Heart left ventricle (tissue), 16 donors: ENCODE measurements at regions of chr20 and their contacts with region 1.

Region 1: DNA sequence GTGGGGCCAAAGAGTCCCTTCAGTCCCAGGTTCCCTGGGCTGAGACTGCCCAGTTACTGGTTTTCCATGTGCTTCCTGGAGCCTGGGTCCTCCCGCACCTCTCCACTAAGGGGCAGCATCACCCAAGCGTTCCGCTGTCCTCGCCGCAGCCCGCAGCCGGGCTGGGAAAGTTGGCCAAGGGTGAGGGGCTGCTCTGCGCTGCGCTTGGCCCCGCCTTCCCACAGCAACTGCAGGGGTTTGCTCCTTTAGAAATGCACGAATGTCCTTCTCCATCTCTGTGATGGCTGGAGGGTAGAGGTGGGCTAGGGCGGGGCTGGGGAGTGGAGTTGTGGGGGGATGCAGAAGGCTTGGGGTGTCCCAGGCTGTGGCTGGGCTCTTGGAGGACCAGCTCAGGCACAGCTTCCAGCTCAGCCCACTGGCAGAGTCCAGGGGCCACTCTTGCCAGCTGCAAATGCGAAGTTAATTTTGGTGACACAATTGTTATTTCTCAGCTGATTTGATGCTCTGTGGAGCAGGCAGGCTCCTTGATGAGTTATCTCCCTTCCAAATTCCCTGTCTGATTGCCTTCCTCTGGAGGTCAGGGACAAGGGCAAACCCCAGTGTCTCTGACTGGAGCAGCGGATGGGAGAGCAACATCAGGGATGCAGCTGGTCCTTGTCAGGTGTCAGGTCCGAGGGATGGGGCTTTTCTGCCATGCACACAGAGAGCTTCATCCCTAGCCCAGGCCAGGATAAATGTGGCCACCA is 63.2 kb downstream of the NOL4L start:
- DNase-seq: peak in 4 of 5 donors; percentile 64 to 81 (median 70)
- ATAC-seq: peak; percentile 45 to 80 (median 73)
- H3K4me3 ChIP-seq: no peak overlapping the region
- H3K27ac ChIP-seq: no peak overlapping the region
- H3K4me1 ChIP-seq: peaks cover 0 to 59% (median 36%) of the 10 kb centered on the region in 12 donors
- H3K27me3 ChIP-seq: no peaks in the 10 kb centered on the region
- CTCF ChIP-seq: peak; percentile 76 to 92 (median 83)
- POLR2A ChIP-seq: no peak

Region 2: DNA sequence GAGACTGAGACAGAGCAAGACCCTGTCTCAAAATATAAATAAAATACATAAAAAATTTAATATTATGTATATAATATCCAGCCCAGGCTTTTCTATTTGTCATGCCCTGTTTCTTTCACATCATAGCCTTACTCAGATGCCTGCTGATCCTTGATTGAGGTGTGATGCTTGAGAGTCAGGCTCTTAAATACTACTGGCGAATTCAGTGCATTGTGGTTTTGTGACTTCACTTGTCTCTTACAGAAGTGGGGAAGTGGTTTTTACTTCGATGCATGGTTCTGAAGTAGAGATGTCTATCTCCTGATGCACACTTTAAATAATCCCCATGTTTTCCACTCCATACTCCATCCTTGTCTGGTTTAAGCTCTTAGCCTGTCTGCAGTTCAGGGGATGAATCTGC is 134.7 kb before region 1 on chr20:
- intact Hi-C with region 1: no loop called
- DNase-seq: no peak
- ATAC-seq: no peak
- H3K4me3 ChIP-seq: no peak overlapping the region
- H3K27ac ChIP-seq: no peak overlapping the region
- H3K4me1 ChIP-seq: peaks cover 0 to 35% (median 19%) of the 10 kb centered on the region in 12 donors
- H3K27me3 ChIP-seq: no peaks in the 10 kb centered on the region
- CTCF ChIP-seq: no peak
- POLR2A ChIP-seq: no peak

Region 3: DNA sequence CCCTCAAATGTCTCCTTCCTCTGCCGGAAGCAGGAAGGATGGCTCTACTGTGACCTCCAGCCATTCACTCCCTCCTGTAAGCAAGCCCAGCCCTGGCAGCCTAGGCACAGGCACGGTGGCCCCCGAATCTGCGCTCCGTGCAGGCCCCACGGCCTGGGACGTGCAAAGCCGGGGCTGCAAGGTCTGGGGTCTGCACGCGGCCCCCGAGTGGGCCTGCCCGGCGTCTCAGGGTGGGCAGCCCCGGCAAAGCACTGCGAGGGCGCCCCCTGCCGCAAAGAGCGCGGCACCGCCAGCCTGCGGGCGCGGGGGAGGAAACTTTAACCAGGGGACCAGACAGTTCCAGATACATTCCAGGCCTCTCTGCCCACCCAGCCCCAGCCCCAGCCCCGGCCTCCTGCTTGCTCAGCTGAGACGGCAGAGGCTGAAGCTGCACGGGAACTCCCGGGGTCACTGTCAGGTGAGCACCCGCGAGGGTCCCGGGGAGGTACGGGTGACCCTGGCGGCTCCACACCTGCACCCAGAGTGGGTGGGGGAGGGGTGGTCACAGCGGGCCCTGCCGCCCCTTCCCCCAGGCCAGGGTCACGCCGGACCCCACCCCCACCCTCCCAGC is 65.0 kb before region 1 on chr20:
- intact Hi-C with region 1: no loop called
- DNase-seq: peak in 2 of 5 donors; percentile 55 to 69
- ATAC-seq: peak; percentile 45 to 74 (median 56)
- H3K4me3 ChIP-seq: peak overlapping the region; percentile 19 to 72 (median 55)
- H3K27ac ChIP-seq: peak overlapping the region in 4 of 12 donors; percentile 24 to 64 (median 42)
- H3K4me1 ChIP-seq: peaks cover 0 to 22% (median 16%) of the 10 kb centered on the region in 12 donors
- H3K27me3 ChIP-seq: no peaks in the 10 kb centered on the region
- CTCF ChIP-seq: peak; percentile 65 to 88 (median 82)
- POLR2A ChIP-seq: no peak

Region 4: DNA sequence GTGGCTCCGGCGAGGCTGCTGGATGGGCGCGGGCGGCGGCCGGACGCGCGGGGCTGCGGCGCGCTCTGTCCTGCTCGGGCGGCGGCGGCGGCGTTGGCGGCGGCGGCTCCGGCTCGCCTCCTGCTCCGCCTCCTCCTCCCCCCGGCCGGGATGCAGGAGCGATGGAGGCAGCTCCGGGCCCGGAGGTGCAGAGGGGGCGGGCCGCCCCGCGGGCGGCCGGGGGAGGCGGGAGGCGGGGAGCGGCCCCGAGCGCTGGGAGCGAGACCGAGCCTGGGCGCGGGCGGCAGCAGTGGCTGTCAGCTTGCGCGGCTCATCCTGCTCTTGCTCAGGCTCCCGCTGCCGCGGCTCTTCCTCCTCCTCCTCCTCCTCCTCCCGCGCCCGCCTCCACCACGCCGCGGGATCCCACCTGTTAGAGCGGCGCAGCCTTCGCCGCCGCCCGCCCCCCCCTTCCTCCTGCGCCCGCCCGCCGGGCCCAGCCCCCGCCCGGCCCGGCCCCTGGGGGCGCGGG is 63.1 kb after region 1 on chr20 and contains the start of gene NOL4L:
- intact Hi-C with region 1: loop called in 2 of 10 experiments (anchors 5 kb)
- DNase-seq: peak in 1 of 5 donors; percentile 47
- ATAC-seq: peak in 2 of 4 donors; percentile 7 to 9
- H3K4me3 ChIP-seq: peak within 1 kb of the TSS; percentile 37 to 80 (median 64)
- H3K27ac ChIP-seq: peak within 1 kb of the TSS in 4 of 12 donors; percentile 34 to 80 (median 53)
- H3K4me1 ChIP-seq: peaks cover 0 to 36% (median 4%) of the 10 kb centered on the region in 12 donors
- H3K27me3 ChIP-seq: peaks cover 0 to 14% (median 4%) of the 10 kb centered on the region in 9 donors
- CTCF ChIP-seq: no peak
- POLR2A ChIP-seq: no peak
- total RNA-seq, gene NOL4L: 3.1 to 15.0 (median 6.7) TPM

Region 5: DNA sequence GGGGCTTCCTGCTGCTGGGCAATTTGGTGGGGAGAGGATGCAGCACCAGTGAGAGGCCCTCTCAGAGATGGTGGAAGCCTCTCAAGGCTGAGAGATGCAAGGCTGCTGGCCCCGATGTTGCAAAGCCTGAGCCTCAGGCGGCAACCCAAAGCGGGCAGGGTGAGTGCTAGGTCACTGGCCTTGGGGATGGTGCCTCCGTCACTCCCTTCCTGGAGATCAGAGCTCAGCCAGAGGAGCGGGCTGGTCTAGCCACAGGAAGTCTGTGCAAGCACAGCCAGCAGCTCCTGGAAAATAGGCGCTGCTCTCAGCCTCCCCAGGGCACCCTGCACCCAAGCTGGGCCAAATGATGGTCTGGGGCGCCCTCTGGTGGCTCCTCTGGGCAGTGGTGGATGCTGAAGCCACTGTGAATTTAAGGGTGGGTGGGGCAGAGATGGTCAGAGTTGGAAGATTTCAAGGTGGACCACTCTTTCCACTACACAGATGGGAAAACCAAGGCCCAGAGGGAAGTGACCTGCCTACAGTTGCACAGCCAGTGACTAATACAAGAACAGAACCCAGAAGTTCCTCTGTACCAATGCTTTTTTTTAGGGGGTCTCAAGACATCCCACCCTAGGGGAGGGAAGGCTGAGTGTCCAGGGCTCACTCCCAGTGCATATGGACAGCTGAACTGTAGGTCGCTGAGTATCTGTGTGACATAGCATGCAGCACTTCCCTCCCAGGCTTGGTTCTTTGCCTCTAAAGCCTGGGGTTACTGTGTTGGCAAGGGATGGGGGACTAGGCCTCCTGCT is 131.0 kb after region 1 on chr20:
- intact Hi-C with region 1: loop called (anchors 1 to 2 kb)
- DNase-seq: peak; percentile 85 to 92 (median 86)
- ATAC-seq: peak; percentile 93 to 98 (median 97)
- H3K4me3 ChIP-seq: no peak overlapping the region
- H3K27ac ChIP-seq: no peak overlapping the region
- H3K4me1 ChIP-seq: peaks cover 0 to 5% (median 1%) of the 10 kb centered on the region in 12 donors
- H3K27me3 ChIP-seq: no peaks in the 10 kb centered on the region
- CTCF ChIP-seq: peak; percentile 90 to 96 (median 94)
- POLR2A ChIP-seq: no peak

Region 6: DNA sequence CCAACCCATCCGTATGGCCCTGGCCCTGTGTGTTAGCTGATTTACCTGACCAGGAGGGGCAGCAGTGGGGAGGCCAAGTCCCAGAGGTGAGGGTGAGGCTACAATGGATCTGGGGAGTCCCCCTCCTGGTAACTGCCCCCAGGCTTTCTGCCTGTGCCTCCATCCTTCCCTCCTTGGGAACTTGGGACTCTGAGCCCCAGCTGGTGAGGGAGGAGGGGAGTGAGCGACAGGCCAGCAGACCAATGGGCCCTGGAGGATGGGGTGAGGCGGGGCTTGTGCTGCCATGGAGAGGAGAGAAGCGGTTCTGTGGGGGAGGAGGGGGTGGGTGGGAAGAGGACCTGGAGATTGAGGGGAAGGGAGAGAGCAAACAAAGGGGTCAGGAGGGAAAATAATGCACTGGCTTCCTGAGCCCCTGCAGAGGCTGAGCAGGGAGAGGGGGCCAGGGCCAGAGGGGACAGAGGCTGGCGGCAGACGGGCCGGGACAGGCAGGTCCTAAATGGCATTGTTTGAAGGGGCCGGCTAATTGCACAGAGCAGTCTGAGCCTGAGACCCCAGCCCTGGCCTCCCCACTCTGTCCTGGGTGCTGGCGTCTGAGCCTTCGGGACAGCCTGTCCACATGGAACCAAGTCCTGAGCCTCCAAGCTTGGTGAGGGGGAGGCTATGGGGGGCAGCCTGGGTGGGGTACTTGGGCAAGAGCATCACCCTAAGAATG is 257.7 kb after region 1 on chr20:
- intact Hi-C with region 1: loop called in 4 of 10 experiments (anchors 5 to 10 kb)
- DNase-seq: no peak
- ATAC-seq: no peak
- H3K4me3 ChIP-seq: no peak overlapping the region
- H3K27ac ChIP-seq: no peak overlapping the region
- H3K4me1 ChIP-seq: peaks cover 0 to 12% (median 0%) of the 10 kb centered on the region in 12 donors
- H3K27me3 ChIP-seq: no peaks in the 10 kb centered on the region
- CTCF ChIP-seq: no peak
- POLR2A ChIP-seq: no peak